A673 (cell line): ENCODE measurements at regions of chr1 and their contacts with region 1.

Region 1: GRCh38 chr1:44208226-44208625 is 5.0 kb upstream of the DMAP1 start:
- DNase-seq: no peak
- H3K4me3 ChIP-seq: no peak overlapping the region
- H3K27ac ChIP-seq: no peak overlapping the region
- H3K4me1 ChIP-seq: peaks cover 6% of the 10 kb centered on the region
- H3K27me3 ChIP-seq: no peaks in the 10 kb centered on the region
- CTCF ChIP-seq: no peak

Region 2: GRCh38 chr1:43969746-43970466 is 238.3 kb before region 1 on chr1 and contains the start of gene DPH2:
- CTCF ChIA-PET with region 1: interaction called, 10 read pairs
- POLR2A ChIA-PET with region 1: no interaction called
- intact Hi-C with region 1: no loop called
- DNase-seq: peak; percentile 98
- H3K4me3 ChIP-seq: peak within 1 kb of the TSS; percentile 93
- H3K27ac ChIP-seq: peak within 1 kb of the TSS; percentile 53
- H3K4me1 ChIP-seq: no peaks in the 10 kb centered on the region
- H3K27me3 ChIP-seq: no peaks in the 10 kb centered on the region
- CTCF ChIP-seq: no peak
- total RNA-seq, gene DPH2: 44.8 and 52.8 TPM in 2 replicates

Region 3: DNA sequence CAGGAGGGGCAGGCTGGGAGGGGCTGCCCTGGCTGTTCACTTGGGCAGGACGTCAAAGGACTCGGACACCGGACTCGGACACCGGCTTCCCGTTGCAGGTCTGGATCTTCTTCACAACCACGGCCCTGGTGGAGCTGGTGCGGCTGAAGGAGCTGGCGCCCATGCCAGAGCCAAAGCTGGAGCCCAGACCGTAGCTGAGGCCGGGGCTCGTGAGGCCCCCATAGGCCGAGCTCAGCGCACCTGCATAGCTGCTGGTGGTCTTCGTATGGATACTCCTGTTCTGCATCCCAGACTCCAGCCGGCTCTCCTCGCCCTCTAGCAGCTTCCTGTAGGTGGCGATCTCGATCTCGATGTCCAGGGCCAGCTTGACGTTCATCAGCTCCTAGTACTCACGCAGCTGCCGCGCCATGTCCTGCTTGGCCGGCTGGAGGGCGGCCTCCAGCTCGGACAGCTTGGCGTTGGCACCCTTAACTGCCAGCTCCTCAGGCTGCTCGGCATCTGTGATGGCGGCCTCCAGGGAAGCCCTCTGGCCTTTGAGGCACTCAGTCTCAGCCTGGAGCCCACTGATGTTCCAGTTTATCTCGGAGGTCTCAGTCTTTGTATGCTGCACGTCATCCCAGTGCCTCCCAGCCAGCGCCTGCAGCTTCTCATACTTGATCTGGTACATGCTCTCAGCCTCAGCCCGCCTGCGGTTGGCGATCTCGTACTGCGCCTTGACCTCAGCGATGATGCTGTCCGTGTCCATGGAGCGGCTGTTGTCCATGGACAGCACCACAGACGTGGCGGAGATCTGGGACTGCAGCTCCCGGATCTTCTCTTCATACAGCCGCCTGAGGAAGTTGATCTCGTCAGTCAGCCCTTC is 104.7 kb before region 1 on chr1:
- CTCF ChIA-PET with region 1: no interaction called
- POLR2A ChIA-PET with region 1: no interaction called
- intact Hi-C with region 1: loop called (anchors 10 kb)
- DNase-seq: no peak
- H3K4me3 ChIP-seq: no peak overlapping the region
- H3K27ac ChIP-seq: no peak overlapping the region
- H3K4me1 ChIP-seq: no peaks in the 10 kb centered on the region
- H3K27me3 ChIP-seq: peaks cover 14% of the 10 kb centered on the region
- CTCF ChIP-seq: 0 out of 2 replicates have a peak, but pooled peaks have one; percentile 27